AG04450 (cell line): ENCODE measurements at regions of chr11 and their contacts with region 1.

Region 1: DNA sequence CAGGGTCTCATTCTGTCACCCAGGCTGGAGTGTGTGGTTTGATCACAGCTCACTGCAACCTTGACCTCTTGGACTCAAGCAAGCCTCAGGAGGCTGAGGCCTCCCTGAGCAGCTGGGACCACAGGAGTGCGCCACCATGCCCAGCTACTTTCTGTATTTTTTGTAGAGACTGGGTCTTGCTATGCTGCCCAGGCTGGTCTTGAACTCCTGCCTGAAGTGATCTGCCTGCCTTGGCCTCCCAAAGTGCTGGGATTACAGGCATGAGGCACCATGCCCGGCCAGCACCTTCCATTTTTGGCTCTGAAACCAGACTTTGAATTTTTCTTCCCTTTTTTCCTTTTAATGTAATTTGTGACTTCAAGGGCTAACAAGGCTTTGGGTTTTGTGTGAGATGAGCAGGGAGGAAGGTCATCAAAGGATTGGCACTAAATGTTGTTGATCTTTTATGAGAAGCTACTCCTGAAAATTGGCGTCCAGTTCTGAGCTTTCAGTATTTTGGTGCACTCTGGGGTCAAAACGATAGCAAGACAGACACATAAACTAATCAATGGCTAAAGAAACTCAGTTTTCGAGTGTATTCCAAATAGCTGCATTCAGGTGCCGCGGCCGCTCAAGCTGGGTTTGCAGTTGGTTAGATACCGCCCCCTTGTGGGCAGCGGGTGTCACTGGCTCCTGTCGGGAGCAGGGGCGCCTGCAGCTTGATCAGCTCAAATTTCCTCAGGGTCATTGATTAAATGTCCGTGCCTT is 51.9 kb upstream of the CLMP start:
- DNase-seq: peak; percentile 65
- H3K4me3 ChIP-seq: no peak overlapping the region
- H3K27ac ChIP-seq: no peak overlapping the region
- H3K27me3 ChIP-seq: no peaks in the 10 kb centered on the region
- CTCF ChIP-seq: peak; percentile 99

Region 2: GRCh38 chr11:123054301-123055065 is 192.4 kb before region 1 on chr11:
- CTCF ChIA-PET with region 1: interaction called, 12 read pairs
- POLR2A ChIA-PET with region 1: interaction called, 3 read pairs
- DNase-seq: peak; percentile 39
- H3K4me3 ChIP-seq: no peak overlapping the region
- H3K27ac ChIP-seq: no peak overlapping the region
- H3K27me3 ChIP-seq: no peaks in the 10 kb centered on the region
- CTCF ChIP-seq: peak; percentile 74

Region 3: GRCh38 chr11:123103326-123103980 is 143.5 kb before region 1 on chr11:
- CTCF ChIA-PET with region 1: interaction called, 130 read pairs
- POLR2A ChIA-PET with region 1: interaction called, 3 read pairs
- DNase-seq: peak; percentile 34
- H3K4me3 ChIP-seq: no peak overlapping the region
- H3K27ac ChIP-seq: no peak overlapping the region
- H3K27me3 ChIP-seq: no peaks in the 10 kb centered on the region
- CTCF ChIP-seq: peak; percentile 64

Region 4: DNA sequence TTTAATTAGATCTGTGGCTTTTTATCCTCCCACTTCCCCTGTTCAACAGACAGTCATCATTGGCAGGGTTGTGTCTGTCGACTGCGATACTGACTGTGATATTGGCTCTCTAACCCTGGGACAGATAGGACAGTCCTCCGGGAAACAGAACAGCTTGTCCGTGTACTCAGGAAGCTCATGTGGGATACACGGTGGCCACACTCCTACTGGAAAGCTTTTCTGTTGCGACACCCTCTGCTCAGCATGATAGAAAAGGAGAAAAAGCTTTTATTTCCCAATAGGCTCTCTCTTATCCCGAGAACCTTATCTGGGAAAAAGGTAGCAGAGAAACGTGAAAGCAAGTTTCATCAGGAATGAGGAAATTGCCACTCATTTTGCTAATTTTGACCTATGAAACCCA is 124.6 kb before region 1 on chr11:
- CTCF ChIA-PET with region 1: interaction called, 20 read pairs
- POLR2A ChIA-PET with region 1: no interaction called
- DNase-seq: no peak
- H3K4me3 ChIP-seq: no peak overlapping the region
- H3K27ac ChIP-seq: peak overlapping the region; percentile 75
- H3K27me3 ChIP-seq: no peaks in the 10 kb centered on the region
- CTCF ChIP-seq: no peak

Region 5: GRCh38 chr11:123166071-123166559 is 80.8 kb before region 1 on chr11:
- CTCF ChIA-PET with region 1: interaction called, 33 read pairs
- POLR2A ChIA-PET with region 1: interaction called, 13 read pairs
- DNase-seq: peak; percentile 97
- H3K4me3 ChIP-seq: no peak overlapping the region
- H3K27ac ChIP-seq: peak overlapping the region; percentile 93
- H3K27me3 ChIP-seq: no peaks in the 10 kb centered on the region
- CTCF ChIP-seq: peak; percentile 72

Region 6: GRCh38 chr11:123195188-123196059 is 51.5 kb before region 1 on chr11 and contains the start of gene CLMP:
- CTCF ChIA-PET with region 1: interaction called, 24 read pairs
- POLR2A ChIA-PET with region 1: interaction called, 8 read pairs
- DNase-seq: no peak
- H3K4me3 ChIP-seq: peak within 1 kb of the TSS; percentile 94
- H3K27ac ChIP-seq: peak within 1 kb of the TSS; percentile 93
- H3K27me3 ChIP-seq: no peaks in the 10 kb centered on the region
- CTCF ChIP-seq: no peak
- polyA plus RNA-seq, gene CLMP: 251 and 288 TPM in 2 replicates

Region 7: GRCh38 chr11:123261345-123262106 is 14.6 kb after region 1 on chr11:
- CTCF ChIA-PET with region 1: interaction called, 54 read pairs
- POLR2A ChIA-PET with region 1: no interaction called
- DNase-seq: no peak
- H3K4me3 ChIP-seq: peak overlapping the region; percentile 20
- H3K27ac ChIP-seq: no peak overlapping the region
- H3K27me3 ChIP-seq: peaks cover 9% of the 10 kb centered on the region
- CTCF ChIP-seq: peak; percentile 97